ENCODE measurements at regions of chr20 and their contacts with region 1.

Region 1: GRCh38 chr20:41910558-41910957 is 292.4 kb upstream of the CHD6 start:
- DNase-seq: no peak
- H3K4me3 ChIP-seq: no peak overlapping the region
- H3K27ac ChIP-seq: no peak overlapping the region
- H3K4me1 ChIP-seq: no peaks in the 10 kb centered on the region
- H3K27me3 ChIP-seq: no peaks in the 10 kb centered on the region
- CTCF ChIP-seq: no peak
- EP300 ChIP-seq: no peak
- POLR2A ChIP-seq: no peak

Region 2: DNA sequence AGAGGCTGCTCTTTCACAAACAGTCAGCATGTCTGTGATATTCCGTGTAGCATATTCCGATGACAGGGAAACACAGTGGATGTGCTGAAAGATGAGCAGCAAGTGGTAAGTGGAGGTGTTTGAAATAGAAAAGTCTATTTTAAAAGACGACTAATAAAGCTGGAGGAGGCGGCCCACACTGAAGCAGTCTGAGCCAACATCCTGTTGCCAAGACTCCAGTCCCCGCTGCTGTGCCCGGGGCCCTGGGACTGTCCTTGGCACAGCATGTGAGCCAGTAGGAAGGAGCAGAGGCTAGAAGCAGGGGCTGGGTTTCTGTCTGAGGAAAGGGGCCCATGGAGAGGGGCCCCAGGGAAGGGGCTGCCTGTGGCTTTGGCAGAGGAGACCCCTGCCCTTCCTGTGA is 59.1 kb after region 1 on chr20:
- in situ Hi-C with region 1: loop called in 1 of 4 experiments (anchors 10 kb)
- intact Hi-C with region 1: no loop called
- DNase-seq: no peak
- H3K4me3 ChIP-seq: no peak overlapping the region
- H3K27ac ChIP-seq: no peak overlapping the region
- H3K4me1 ChIP-seq: no peaks in the 10 kb centered on the region
- H3K27me3 ChIP-seq: no peaks in the 10 kb centered on the region
- CTCF ChIP-seq: no peak
- EP300 ChIP-seq: no peak
- POLR2A ChIP-seq: no peak

Measured in transverse colon (tissue), 4 donors.